T-cell (primary cell): ENCODE measurements at regions of chr1 and their contacts with region 1.

Region 1: GRCh38 chr1:210099921-210100320 is 132.7 kb upstream of the SERTAD4 start:
- DNase-seq: no peak
- ATAC-seq: no peak
- H3K4me3 ChIP-seq: no peak overlapping the region
- H3K4me3 Mint-ChIP-seq: no peak overlapping the region
- H3K27ac ChIP-seq: no peak overlapping the region
- H3K27ac Mint-ChIP-seq: no peak overlapping the region
- H3K4me1 ChIP-seq: no peaks in the 10 kb centered on the region
- H3K4me1 Mint-ChIP-seq: no peaks in the 10 kb centered on the region
- H3K27me3 ChIP-seq: no peaks in the 10 kb centered on the region
- H3K27me3 Mint-ChIP-seq: peaks cover 14 to 15% of the 10 kb centered on the region in 2 donors

Region 2: DNA sequence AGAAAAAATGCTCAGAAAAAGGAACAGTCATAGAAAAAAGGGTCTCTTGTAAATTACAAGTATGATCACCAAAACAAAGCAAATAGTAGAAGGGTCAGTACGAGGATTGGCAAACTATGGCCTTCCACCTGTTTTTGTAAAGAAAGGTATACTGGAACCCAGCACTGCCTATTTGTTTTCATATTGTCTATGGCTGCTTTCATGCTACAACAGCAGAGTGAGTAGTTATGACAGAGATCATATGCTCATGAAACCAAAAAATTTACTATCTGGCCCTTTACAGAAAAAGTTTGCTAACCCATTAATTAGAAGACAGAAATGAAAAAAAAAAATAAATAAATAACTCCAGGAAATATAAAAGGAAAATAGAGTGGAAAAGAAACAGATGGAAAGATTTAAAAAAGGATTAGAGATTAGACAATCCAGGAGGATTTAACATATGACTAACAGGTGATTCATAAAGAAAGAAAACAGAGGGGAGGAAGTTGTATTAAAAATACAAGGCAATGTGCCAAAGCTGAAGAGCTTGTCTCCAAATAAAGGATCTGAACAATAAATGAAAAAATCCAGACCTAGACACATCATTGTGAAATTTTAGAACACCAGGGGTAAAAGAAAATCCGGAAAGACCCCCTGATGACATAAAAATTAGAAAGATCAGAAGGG is 24.1 kb after region 1 on chr1:
- CTCF ChIA-PET with region 1: no interaction called
- POLR2A ChIA-PET with region 1: interaction called in 1 of 2 experiments, 12 read pairs
- DNase-seq: no peak
- ATAC-seq: no peak
- H3K4me3 ChIP-seq: no peak overlapping the region
- H3K4me3 Mint-ChIP-seq: no peak overlapping the region
- H3K27ac ChIP-seq: no peak overlapping the region
- H3K27ac Mint-ChIP-seq: no peak overlapping the region
- H3K4me1 ChIP-seq: no peaks in the 10 kb centered on the region
- H3K4me1 Mint-ChIP-seq: no peaks in the 10 kb centered on the region
- H3K27me3 ChIP-seq: no peaks in the 10 kb centered on the region
- H3K27me3 Mint-ChIP-seq: peaks cover 3 to 6% of the 10 kb centered on the region in 2 donors

Region 3: GRCh38 chr1:210233216-210234020 is 133.5 kb after region 1 on chr1:
- CTCF ChIA-PET with region 1: no interaction called
- POLR2A ChIA-PET with region 1: no interaction called
- DNase-seq: no peak
- ATAC-seq: peak in 1 of 4 experiments; percentile 27
- H3K4me3 ChIP-seq: peak overlapping the region; percentile 21 to 61
- H3K4me3 Mint-ChIP-seq: peak overlapping the region in 2 of 3 donors; percentile 37 to 50
- H3K27ac ChIP-seq: no peak overlapping the region
- H3K27ac Mint-ChIP-seq: no peak overlapping the region
- H3K4me1 ChIP-seq: peaks cover 2 to 18% of the 10 kb centered on the region in 2 experiments
- H3K4me1 Mint-ChIP-seq: peaks cover 6 to 13% (median 11%) of the 10 kb centered on the region in 3 donors
- H3K27me3 ChIP-seq: peaks cover 10 to 39% of the 10 kb centered on the region in 2 experiments
- H3K27me3 Mint-ChIP-seq: peaks cover 48 to 57% of the 10 kb centered on the region in 2 donors